HCT116 (cell line): ENCODE measurements at regions of chr7 and their contacts with region 1.

Region 1: GRCh38 chr7:148987010-148987750 is 41.1 kb downstream of the PDIA4 start:
- DNase-seq: peak; percentile 87
- ATAC-seq: peak; percentile 91
- H3K4me3 ChIP-seq: peak overlapping the region; percentile 48 to 62
- H3K27ac ChIP-seq: peak overlapping the region; percentile 54
- H3K4me1 ChIP-seq: peaks cover 4 to 25% of the 10 kb centered on the region in 2 experiments; a peak in 3 of 4 replicates
- H3K27me3 ChIP-seq: no peaks in the 10 kb centered on the region
- CTCF ChIP-seq: no peak
- POLR2A ChIP-seq: no peak
- RAD21 ChIP-seq: no peak

Region 2: GRCh38 chr7:148884299-148885022 is 102.7 kb before region 1 on chr7:
- CTCF ChIA-PET with region 1: no interaction called
- POLR2A ChIA-PET with region 1: no interaction called
- RAD21 ChIA-PET with region 1: no interaction called
- intact Hi-C with region 1: loop called (anchors 1 kb)
- DNase-seq: peak; percentile 74
- ATAC-seq: peak; percentile 91
- H3K4me3 ChIP-seq: peak overlapping the region; percentile 69 to 78
- H3K27ac ChIP-seq: peak overlapping the region; percentile 94
- H3K4me1 ChIP-seq: peaks cover 8 to 19% of the 10 kb centered on the region in 2 experiments; a peak in 3 of 4 replicates
- H3K27me3 ChIP-seq: no peaks in the 10 kb centered on the region
- CTCF ChIP-seq: no peak
- POLR2A ChIP-seq: no peak
- RAD21 ChIP-seq: no peak

Region 3: GRCh38 chr7:149586646-149587332 is 599.6 kb after region 1 on chr7:
- CTCF ChIA-PET with region 1: no interaction called
- POLR2A ChIA-PET with region 1: no interaction called
- RAD21 ChIA-PET with region 1: no interaction called
- intact Hi-C with region 1: no loop called
- DNase-seq: no peak
- ATAC-seq: no peak
- H3K4me3 ChIP-seq: no peak overlapping the region
- H3K27ac ChIP-seq: no peak overlapping the region
- H3K4me1 ChIP-seq: no peaks in the 10 kb centered on the region
- H3K27me3 ChIP-seq: no peaks in the 10 kb centered on the region
- CTCF ChIP-seq: no peak
- POLR2A ChIP-seq: no peak
- RAD21 ChIP-seq: no peak